ENCODE measurements at regions of chr15 and their contacts with region 1.

Region 1: DNA sequence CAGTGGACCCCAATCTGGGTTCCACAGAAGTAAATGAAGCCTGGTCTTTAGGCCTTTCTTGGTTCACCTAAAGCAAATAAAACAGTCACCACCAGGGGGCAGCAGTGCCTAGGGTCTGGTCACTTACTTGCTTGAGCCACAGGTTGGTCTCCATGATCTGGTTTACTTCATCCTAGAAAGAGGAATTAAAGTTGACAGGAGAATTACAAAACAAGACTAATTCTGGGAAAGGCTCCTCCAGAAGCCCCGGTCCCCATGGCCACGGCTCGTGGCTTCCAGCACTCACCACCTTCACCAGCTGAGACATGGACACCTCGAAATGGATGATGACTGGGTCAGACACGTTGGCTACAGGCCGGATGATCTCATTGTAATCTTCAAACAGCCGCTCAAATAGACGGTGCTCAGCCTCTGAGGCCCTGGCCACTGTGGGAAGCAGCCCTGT is 2.3 kb downstream of the CHRNA3 start:
- DNase-seq: peak; percentile 74 to 84
- ATAC-seq: peak in 2 of 3 donors; percentile 67 to 74
- H3K4me3 ChIP-seq: no peak overlapping the region
- H3K4me3 Mint-ChIP-seq: no peak overlapping the region
- H3K27ac ChIP-seq: no peak overlapping the region
- H3K27ac Mint-ChIP-seq: no peak overlapping the region
- H3K4me1 ChIP-seq: no peaks in the 10 kb centered on the region
- H3K4me1 Mint-ChIP-seq: no peaks in the 10 kb centered on the region
- H3K27me3 ChIP-seq: peaks cover 10% of the 10 kb centered on the region
- H3K27me3 Mint-ChIP-seq: peaks cover 24 to 37% of the 10 kb centered on the region in 2 donors
- CTCF ChIP-seq: peak; percentile 83

Region 2: DNA sequence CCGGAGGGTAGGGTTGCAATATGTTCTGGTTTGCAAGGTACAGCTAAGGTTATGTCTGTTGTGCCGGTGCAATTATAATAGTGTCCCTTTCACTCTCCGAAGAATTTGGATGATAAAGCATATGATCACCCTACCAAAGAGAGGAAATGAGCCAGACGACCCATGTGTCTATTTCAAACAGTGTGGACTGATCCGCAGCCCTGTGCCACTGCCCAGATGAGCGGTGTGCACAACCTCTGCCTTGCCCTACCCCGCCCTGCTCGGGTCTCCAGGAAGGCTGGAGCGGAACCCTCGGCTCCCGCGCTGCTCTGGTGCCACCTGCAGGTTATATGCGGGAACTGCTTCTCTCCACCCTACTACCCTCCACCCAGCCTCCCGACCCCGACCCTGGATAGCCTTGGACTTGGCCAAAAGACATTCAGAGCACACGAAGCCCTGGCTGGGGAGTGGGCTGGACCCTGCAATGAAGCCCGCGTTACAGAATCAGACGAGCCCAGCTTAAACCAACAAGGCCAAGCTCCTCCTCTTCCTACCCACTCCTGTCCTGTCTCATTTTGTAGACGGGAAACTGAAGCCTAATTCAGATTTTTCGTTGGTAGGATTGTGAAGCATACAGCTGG is 90.9 kb after region 1 on chr15:
- intact Hi-C with region 1: loop called (anchors 1 kb)
- DNase-seq: peak; percentile 54 to 75
- ATAC-seq: peak; percentile 85 to 97 (median 89)
- H3K4me3 ChIP-seq: no peak overlapping the region
- H3K4me3 Mint-ChIP-seq: no peak overlapping the region
- H3K27ac ChIP-seq: no peak overlapping the region
- H3K27ac Mint-ChIP-seq: no peak overlapping the region
- H3K4me1 ChIP-seq: no peaks in the 10 kb centered on the region
- H3K4me1 Mint-ChIP-seq: peaks cover 12 to 21% of the 10 kb centered on the region in 2 donors
- H3K27me3 ChIP-seq: peaks cover 2% of the 10 kb centered on the region
- H3K27me3 Mint-ChIP-seq: peaks cover 25 to 54% of the 10 kb centered on the region in 2 donors
- CTCF ChIP-seq: peak; percentile 86

Measured in natural killer cell (primary cell).